ENCODE measurements at regions of chr2 and their contacts with region 1.

Region 1: GRCh38 chr2:101231240-101231639 is 21.4 kb upstream of the CNOT11 start:
- DNase-seq: no peak
- H3K4me3 ChIP-seq: no peak overlapping the region
- H3K27ac ChIP-seq: no peak overlapping the region
- H3K4me1 ChIP-seq: 0 out of 2 replicates have a peak, but pooled peaks cover 6% of the 10 kb centered on the region
- H3K27me3 ChIP-seq: no peaks in the 10 kb centered on the region
- CTCF ChIP-seq: no peak

Region 2: GRCh38 chr2:100160396-100160795 is 1070.8 kb before region 1 on chr2:
- CTCF ChIA-PET with region 1: no interaction called
- POLR2A ChIA-PET with region 1: no interaction called
- intact Hi-C with region 1: no loop called
- DNase-seq: peak in 1 of 2 experiments; percentile 17
- H3K4me3 ChIP-seq: no peak overlapping the region
- H3K27ac ChIP-seq: no peak overlapping the region
- H3K4me1 ChIP-seq: no peaks in the 10 kb centered on the region
- H3K27me3 ChIP-seq: peaks cover 12% of the 10 kb centered on the region; the same call in 1 of the 2 replicates
- CTCF ChIP-seq: no peak

Region 3: DNA sequence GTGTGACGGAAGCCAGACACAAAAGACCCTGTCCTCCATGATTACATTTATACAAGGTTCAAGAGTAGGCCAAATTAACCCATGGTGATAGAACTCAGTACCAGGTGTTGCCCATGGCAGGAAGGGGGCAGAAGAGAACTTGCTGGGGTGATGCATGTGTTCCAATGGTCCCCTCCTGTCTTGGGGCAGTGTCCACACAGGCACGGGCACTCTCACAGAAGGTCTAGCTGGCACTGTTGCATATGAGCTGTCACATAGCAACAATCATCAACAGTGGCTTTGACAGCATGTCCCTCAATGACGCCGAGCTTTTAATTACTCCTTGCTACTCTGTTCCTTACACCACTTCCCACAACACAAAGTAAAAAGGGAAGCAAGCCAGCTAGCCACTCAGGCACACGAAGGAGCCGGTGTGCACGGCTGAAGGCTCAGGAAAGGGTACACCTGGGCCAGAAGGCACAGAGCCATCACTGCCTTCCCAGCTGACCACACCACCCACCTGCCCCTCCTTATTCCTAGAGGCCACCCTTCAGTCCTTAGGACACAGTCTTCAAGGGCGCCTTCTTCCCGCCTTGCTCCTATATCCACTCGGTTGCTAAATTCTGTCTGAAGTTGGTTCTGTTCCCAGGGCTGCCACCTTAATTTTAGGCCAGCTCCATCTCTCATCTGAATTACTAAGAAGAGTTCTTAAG is 200.2 kb before region 1 on chr2:
- CTCF ChIA-PET with region 1: no interaction called
- POLR2A ChIA-PET with region 1: no interaction called
- intact Hi-C with region 1: no loop called
- DNase-seq: no peak
- H3K4me3 ChIP-seq: no peak overlapping the region
- H3K27ac ChIP-seq: no peak overlapping the region
- H3K4me1 ChIP-seq: no peaks in the 10 kb centered on the region
- H3K27me3 ChIP-seq: no peaks in the 10 kb centered on the region
- CTCF ChIP-seq: no peak

Region 4: DNA sequence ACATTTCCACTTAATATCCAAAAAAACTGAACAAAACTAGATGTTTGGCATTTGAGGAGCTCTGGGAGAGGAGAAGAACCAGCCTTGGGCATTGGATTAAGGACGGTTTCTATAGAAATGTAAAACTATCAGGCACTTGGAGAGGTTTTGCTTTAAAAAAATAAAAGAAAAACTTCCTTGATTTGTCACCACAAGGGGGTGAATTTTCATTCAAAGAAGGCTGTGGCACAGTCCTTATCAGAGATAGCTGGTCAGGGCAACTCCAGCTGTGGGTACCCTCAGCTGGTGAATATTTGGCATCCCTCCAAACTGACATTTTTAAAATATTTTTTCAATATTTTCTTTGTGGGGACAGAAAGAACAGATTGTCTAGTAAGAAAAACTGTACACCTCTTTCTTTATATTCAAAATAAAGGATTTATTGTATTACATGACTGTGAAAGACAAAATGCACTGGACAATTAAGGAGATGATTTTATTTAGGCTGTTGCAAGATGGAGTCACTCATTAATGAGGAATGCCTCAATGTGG is 34.0 kb before region 1 on chr2:
- CTCF ChIA-PET with region 1: interaction called, 10 read pairs
- POLR2A ChIA-PET with region 1: no interaction called
- intact Hi-C with region 1: no loop called
- DNase-seq: no peak
- H3K4me3 ChIP-seq: no peak overlapping the region
- H3K27ac ChIP-seq: no peak overlapping the region
- H3K4me1 ChIP-seq: peaks cover 9% of the 10 kb centered on the region; the same call in 1 of the 2 replicates
- H3K27me3 ChIP-seq: no peaks in the 10 kb centered on the region
- CTCF ChIP-seq: peak; percentile 41; the same call in 1 of the 2 replicates

Region 5: DNA sequence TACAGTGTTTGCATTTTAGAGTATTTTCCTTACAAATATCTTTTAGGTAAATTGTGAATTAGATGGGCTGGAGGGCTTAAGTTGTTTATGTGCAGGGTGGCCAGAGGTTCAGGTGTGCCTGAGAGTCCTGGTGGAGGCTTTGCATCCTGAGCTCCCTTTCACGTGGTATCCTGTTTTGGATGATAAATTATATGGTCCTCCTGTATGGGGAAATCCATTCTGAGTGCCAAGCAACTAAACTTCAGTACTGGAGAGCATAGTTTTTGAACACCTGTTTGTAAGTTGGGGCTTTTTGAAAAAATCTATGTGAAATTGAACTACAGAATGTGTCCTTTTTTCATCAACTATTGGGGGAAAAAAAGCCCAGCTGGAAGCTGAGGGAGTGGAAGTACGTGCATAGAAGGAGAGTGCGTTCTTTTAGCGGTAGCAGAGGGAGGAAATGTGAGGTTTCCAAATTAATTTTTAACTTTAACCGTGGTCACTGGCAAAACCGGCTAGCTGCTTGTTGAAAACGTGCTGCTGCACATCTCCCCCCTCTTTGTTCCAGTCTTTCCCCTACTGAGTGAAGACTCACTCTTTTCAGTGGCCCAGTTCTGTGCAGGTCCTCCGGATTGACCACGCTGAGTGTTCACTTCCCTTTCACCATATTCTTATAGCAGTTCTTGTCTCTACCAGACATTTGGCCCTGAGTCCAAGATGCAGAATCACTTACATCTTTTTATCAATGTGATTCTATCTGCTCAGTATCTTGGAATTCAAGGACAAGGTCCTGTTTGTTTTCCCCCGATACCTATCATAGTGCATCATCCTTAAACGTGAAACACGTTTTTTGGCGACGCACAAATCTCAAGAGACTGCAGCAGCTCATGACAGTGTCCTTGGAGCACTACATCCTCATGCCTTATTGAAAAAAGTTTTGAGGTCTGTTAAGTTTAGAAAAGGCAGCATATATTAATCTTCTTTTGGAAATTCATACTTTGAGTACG is 36.7 kb after region 1 on chr2:
- CTCF ChIA-PET with region 1: no interaction called
- POLR2A ChIA-PET with region 1: no interaction called
- intact Hi-C with region 1: no loop called
- DNase-seq: no peak
- H3K4me3 ChIP-seq: no peak overlapping the region
- H3K27ac ChIP-seq: no peak overlapping the region
- H3K4me1 ChIP-seq: peaks cover 14% of the 10 kb centered on the region
- H3K27me3 ChIP-seq: no peaks in the 10 kb centered on the region
- CTCF ChIP-seq: no peak

Measured in PC-9 (cell line).